ENCODE measurements at regions of chr11 and their contacts with region 1.

Region 1: DNA sequence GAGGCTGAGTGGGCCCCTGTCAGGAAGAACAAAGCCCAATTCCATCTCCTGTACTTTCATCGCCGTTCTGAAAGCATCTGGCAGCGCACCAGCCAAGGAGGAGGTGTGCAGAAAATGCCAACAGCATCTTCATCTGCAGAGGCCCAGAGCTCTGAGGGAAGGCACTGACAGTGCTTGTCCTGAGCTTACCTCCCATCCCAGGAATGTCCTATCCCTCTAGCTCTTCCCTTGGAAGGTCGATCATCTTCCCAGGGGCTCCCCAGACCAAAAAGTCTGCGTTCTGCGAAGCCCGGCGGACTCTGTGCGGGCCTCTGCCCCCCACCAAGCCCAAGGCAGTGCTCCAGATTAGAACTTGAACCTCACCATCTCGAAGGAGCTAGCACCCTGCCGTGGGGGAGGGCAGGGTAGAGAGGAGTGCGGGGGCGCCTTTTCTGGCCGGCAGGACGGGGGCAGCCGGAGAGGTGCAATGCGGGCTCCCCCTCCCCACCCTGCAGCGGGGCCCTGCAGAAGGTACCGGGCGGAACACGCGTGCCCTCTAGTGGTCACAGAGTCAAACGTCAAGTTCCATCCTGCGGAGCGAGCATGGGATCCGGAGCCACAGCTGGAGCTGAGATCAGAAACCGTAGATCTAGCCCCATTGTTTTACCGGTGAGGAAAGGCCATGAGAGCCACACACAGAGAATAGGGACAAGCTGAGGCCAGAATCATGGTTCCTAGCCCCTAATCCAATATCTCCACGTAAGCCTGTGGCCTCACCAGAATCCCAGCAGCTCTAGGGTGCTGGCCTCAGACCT is 5.0 kb downstream of the SCN2B start:
- DNase-seq: peak; percentile 63 to 72 (median 65)
- H3K4me3 ChIP-seq: no peak overlapping the region
- H3K4me3 Mint-ChIP-seq: peak overlapping the region in 2 of 8 donors; percentile 9 to 12
- H3K27ac ChIP-seq: no peak overlapping the region
- H3K27ac Mint-ChIP-seq: no peak overlapping the region
- H3K4me1 ChIP-seq: peaks cover 8% of the 10 kb centered on the region
- H3K4me1 Mint-ChIP-seq: peaks cover 0 to 5% (median 2%) of the 10 kb centered on the region in 4 donors
- H3K27me3 ChIP-seq: no peaks in the 10 kb centered on the region
- H3K27me3 Mint-ChIP-seq: peaks cover 4 to 15% of the 10 kb centered on the region in 2 donors

Region 2: GRCh38 chr11:117807482-117808327 is 363.8 kb before region 1 on chr11:
- CTCF ChIA-PET with region 1: interaction called, 38 read pairs
- POLR2A ChIA-PET with region 1: interaction called, 3 read pairs
- intact Hi-C with region 1: loop called (anchors 1 kb)
- DNase-seq: peak; percentile 58 to 70 (median 62)
- H3K4me3 ChIP-seq: no peak overlapping the region
- H3K4me3 Mint-ChIP-seq: no peak overlapping the region
- H3K27ac ChIP-seq: no peak overlapping the region
- H3K27ac Mint-ChIP-seq: peak overlapping the region in 1 of 7 donors; percentile 45
- H3K4me1 ChIP-seq: peaks cover 10% of the 10 kb centered on the region
- H3K4me1 Mint-ChIP-seq: peaks cover 7 to 17% (median 10%) of the 10 kb centered on the region in 4 donors
- H3K27me3 ChIP-seq: no peaks in the 10 kb centered on the region
- H3K27me3 Mint-ChIP-seq: peaks cover 0 to 3% of the 10 kb centered on the region in 2 donors

Region 3: GRCh38 chr11:118139578-118139977 is 31.9 kb before region 1 on chr11:
- CTCF ChIA-PET with region 1: interaction called, 109 read pairs
- POLR2A ChIA-PET with region 1: interaction called, 6 read pairs
- intact Hi-C with region 1: no loop called
- DNase-seq: no peak
- H3K4me3 ChIP-seq: no peak overlapping the region
- H3K4me3 Mint-ChIP-seq: no peak overlapping the region
- H3K27ac ChIP-seq: no peak overlapping the region
- H3K27ac Mint-ChIP-seq: no peak overlapping the region
- H3K4me1 ChIP-seq: no peaks in the 10 kb centered on the region
- H3K4me1 Mint-ChIP-seq: no peaks in the 10 kb centered on the region
- H3K27me3 ChIP-seq: peaks cover 2% of the 10 kb centered on the region
- H3K27me3 Mint-ChIP-seq: peaks cover 51 to 53% of the 10 kb centered on the region in 2 donors

Region 4: GRCh38 chr11:118152552-118153471 is 18.7 kb before region 1 on chr11 and contains the start of gene SCN4B:
- CTCF ChIA-PET with region 1: interaction called, 109 read pairs
- POLR2A ChIA-PET with region 1: no interaction called
- intact Hi-C with region 1: no loop called
- DNase-seq: peak in 3 of 5 donors; percentile 14 to 19 (median 17)
- H3K4me3 ChIP-seq: peak within 1 kb of the TSS in 1 of 2 donors; percentile 39
- H3K4me3 Mint-ChIP-seq: peak within 1 kb of the TSS; percentile 54 to 80 (median 64)
- H3K27ac ChIP-seq: no peak within 1 kb of the TSS
- H3K27ac Mint-ChIP-seq: no peak within 1 kb of the TSS
- H3K4me1 ChIP-seq: peaks cover 13% of the 10 kb centered on the region
- H3K4me1 Mint-ChIP-seq: peaks cover 3 to 26% (median 15%) of the 10 kb centered on the region in 4 donors
- H3K27me3 ChIP-seq: peaks cover 49% of the 10 kb centered on the region
- H3K27me3 Mint-ChIP-seq: peaks cover 37 to 48% of the 10 kb centered on the region in 2 donors
- total RNA-seq, gene SCN4B: not detected

Region 5: GRCh38 chr11:118283756-118284350 is 112.4 kb after region 1 on chr11:
- CTCF ChIA-PET with region 1: interaction called, 19 read pairs
- POLR2A ChIA-PET with region 1: no interaction called
- intact Hi-C with region 1: no loop called
- DNase-seq: peak in 1 of 5 donors; percentile 14
- H3K4me3 ChIP-seq: no peak overlapping the region
- H3K4me3 Mint-ChIP-seq: peak overlapping the region in 4 of 8 donors; percentile 3 to 51 (median 25)
- H3K27ac ChIP-seq: no peak overlapping the region
- H3K27ac Mint-ChIP-seq: peak overlapping the region; percentile 5 to 76 (median 15)
- H3K4me1 ChIP-seq: peaks cover 23% of the 10 kb centered on the region
- H3K4me1 Mint-ChIP-seq: peaks cover 18 to 30% (median 25%) of the 10 kb centered on the region in 4 donors
- H3K27me3 ChIP-seq: no peaks in the 10 kb centered on the region
- H3K27me3 Mint-ChIP-seq: no peaks in the 10 kb centered on the region

Region 6: DNA sequence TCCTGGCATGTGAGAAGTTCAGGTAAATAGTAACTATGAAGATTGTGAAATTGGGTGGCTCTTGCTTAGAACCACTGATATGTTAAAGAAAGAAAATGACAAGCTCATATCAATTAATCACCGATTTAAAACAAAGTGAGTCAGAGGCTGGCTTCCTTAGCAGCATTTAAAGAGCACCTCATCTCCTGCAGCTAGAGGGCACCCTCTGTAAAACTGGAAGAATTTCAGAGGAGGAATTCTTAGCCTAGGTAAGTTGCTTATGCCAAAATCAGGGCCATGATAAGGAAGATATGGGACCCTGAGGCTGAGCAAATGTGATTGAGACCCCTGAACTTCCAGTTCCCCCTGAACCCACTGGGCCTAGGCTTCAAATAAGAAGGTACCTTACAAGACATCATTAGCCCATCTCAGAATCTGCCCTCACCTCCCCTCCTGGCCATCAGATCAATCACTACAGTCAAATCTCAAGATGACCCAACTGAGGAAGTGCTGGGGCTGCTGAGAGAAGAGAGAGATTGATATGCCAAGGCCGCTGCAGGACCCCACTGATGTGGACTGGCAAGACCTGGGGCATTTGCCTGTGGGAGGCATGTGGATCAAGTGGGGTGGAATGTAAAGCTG is 124.5 kb after region 1 on chr11:
- CTCF ChIA-PET with region 1: interaction called, 19 read pairs
- POLR2A ChIA-PET with region 1: no interaction called
- intact Hi-C with region 1: no loop called
- DNase-seq: peak; percentile 46 to 59 (median 52)
- H3K4me3 ChIP-seq: no peak overlapping the region
- H3K4me3 Mint-ChIP-seq: peak overlapping the region in 1 of 8 donors; percentile 11
- H3K27ac ChIP-seq: no peak overlapping the region
- H3K27ac Mint-ChIP-seq: peak overlapping the region; percentile 0 to 88 (median 72)
- H3K4me1 ChIP-seq: peaks cover 9% of the 10 kb centered on the region
- H3K4me1 Mint-ChIP-seq: peaks cover 10 to 22% (median 14%) of the 10 kb centered on the region in 4 donors
- H3K27me3 ChIP-seq: no peaks in the 10 kb centered on the region
- H3K27me3 Mint-ChIP-seq: no peaks in the 10 kb centered on the region

Measured in CD4-positive, alpha-beta memory T cell (primary cell).